Heart left ventricle (tissue), 16 donors: ENCODE measurements at regions of chr7 and their contacts with region 1.

Region 1: DNA sequence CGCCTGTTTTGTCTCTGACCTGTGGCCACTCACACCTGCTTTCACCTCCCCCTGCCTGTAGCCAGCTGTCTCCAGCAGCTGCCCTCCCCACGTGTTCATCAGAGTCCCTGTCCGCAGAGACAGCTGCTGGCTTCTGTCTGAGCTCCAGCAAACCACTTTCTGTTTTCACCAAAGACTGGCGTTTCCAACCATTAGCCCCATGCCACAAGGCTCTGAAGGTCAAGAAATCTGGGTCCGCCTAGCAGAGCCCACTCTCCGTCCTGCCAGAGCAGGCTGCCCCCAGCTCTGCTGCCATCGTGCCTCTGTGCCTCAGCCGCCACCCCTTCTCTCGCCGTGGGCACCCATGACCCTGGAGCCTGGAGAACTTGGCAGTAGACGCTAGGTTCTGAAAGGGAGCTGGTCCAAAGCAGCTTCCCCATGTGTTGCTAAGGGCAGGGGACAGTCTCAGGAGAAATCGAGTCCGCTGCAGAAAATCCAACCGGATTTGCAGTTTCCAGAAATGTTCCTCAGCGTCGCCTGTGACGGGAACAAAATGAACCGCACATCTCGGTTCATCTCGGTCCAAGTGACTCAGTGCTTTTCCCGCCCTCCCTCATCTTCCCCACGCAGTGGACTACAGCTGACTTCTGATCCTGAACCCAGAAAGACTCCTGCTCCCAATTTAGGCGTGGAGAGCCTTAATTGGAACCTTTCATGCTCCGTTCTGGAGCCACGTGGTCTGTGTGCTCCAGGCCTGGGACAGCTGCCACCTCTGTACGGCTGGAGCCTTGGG is 28.0 kb downstream of the TMEM120A start:
- DNase-seq: peak in 4 of 5 donors; percentile 66 to 77 (median 74)
- ATAC-seq: peak; percentile 59 to 64 (median 61)
- H3K4me3 ChIP-seq: peak overlapping the region in 5 of 12 donors; percentile 7 to 20 (median 18)
- H3K27ac ChIP-seq: peak overlapping the region; percentile 74 to 93 (median 83)
- H3K4me1 ChIP-seq: peaks cover 14 to 83% (median 70%) of the 10 kb centered on the region in 12 donors
- H3K27me3 ChIP-seq: no peaks in the 10 kb centered on the region
- CTCF ChIP-seq: no peak
- POLR2A ChIP-seq: no peak

Region 2: GRCh38 chr7:75662579-75663301 is 303.6 kb before region 1 on chr7:
- intact Hi-C with region 1: no loop called
- DNase-seq: no peak
- ATAC-seq: no peak
- H3K4me3 ChIP-seq: no peak overlapping the region
- H3K27ac ChIP-seq: no peak overlapping the region
- H3K4me1 ChIP-seq: peaks cover 0 to 3% (median 0%) of the 10 kb centered on the region in 12 donors
- H3K27me3 ChIP-seq: no peaks in the 10 kb centered on the region
- CTCF ChIP-seq: no peak
- POLR2A ChIP-seq: no peak

Region 3: GRCh38 chr7:75808106-75808505 is 158.3 kb before region 1 on chr7:
- intact Hi-C with region 1: no loop called
- DNase-seq: no peak
- ATAC-seq: no peak
- H3K4me3 ChIP-seq: no peak overlapping the region
- H3K27ac ChIP-seq: no peak overlapping the region
- H3K4me1 ChIP-seq: no peaks in the 10 kb centered on the region
- H3K27me3 ChIP-seq: no peaks in the 10 kb centered on the region
- CTCF ChIP-seq: no peak
- POLR2A ChIP-seq: no peak

Region 4: GRCh38 chr7:75878769-75879611 is 87.4 kb before region 1 on chr7 and contains the start of gene RHBDD2:
- intact Hi-C with region 1: loop called in 3 of 10 experiments (anchors 2 to 10 kb)
- DNase-seq: peak; percentile 96 to 98 (median 97)
- ATAC-seq: peak; percentile 97 to 100 (median 99)
- H3K4me3 ChIP-seq: peak within 1 kb of the TSS; percentile 45 to 98 (median 88)
- H3K27ac ChIP-seq: peak within 1 kb of the TSS; percentile 11 to 89 (median 85)
- H3K4me1 ChIP-seq: peaks cover 0 to 43% (median 15%) of the 10 kb centered on the region in 12 donors
- H3K27me3 ChIP-seq: no peaks in the 10 kb centered on the region
- CTCF ChIP-seq: peak in 7 of 12 donors; percentile 3 to 50 (median 26)
- POLR2A ChIP-seq: peak; percentile 90 to 99
- total RNA-seq, gene RHBDD2: 23.6 to 44.1 (median 32.5) TPM